Head of caudate nucleus (tissue), 42 donors: ENCODE measurements at regions of chr1 and their contacts with region 1.

Region 1: DNA sequence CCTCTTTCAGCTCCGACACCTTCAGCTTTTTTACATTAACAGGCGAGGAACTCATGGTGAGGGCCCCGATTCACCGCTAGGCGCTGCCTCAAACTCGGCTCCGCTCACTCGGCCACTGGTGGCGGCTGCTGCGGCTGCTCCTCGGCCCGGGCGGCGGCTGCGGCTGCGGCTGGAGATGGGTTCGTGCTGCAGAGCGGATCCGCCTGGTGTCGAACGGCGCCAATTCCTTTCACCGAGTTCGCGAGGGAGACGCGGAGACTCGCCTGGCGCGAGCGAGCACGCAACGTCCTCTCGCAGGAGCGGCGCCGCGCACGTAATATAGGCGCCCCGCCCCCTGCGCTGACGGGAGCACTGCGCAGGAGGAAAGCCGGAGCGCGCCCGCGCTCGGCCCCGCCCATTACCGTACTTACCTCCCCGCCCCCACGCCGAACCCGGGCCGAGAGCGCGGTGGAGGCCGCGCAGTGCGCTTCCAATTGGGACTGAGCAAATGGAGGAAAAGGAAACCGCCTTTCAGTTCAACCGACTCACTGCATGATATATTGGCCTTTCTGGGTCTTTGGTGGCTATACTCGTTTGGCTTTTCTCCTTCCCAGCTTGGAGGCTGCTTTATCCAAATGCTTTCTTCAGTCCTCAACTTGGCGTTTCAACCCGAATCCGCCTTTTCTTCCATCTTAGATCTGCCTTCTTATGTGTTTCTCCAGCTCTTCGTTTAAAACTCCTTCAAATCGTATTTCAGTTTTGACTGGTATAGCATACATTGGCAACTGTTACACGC is at the start of gene HNRNPU:
- DNase-seq: peak; percentile 89 to 99 (median 97)

Region 2: DNA sequence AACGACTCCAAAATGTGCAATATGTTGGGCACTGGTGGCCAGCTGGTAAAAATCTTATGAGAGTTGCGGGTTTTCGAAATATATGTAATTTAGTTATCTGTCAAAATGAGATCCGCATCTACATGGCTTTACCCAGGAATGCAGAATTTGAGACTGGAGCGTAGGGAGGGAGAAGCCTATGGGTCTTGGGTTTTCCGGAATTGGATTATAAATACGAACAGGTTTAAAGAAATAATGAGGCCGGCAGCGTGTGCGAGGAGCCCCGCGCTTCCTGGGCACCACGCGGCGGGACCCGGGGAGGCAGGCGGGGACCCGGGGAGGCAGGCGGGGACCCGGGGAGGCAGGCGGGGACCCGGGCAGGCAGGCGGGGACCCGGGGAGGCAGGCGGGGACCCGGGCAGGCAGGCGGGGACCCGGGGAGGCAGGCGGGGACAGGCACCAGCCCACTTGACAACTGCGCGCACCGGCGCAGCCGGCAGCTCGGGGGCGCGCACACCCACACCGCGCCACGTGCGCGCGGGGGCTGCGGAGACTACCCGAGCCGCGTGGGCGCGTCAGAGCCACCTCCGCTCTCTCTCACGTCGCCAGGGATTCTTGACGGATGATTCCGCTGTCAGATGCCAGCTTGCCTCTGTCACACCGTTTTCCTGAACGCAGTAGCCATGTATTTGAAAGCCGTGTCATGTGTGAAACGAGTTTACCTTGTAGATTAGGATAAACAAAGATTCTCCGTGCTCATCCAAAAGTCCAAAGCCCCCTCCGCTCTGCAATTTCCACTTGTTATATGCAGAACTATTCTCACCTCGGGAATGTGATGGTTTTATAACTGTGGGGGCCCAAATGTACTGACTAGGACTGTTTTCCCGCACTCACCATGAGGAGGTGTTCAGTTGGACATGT is 54.2 kb after region 1 on chr1:
- intact Hi-C with region 1: loop called (anchors 2 kb)
- DNase-seq: peak; percentile 21 to 85 (median 71)

Region 3: GRCh38 chr1:244970661-244971551 is 106.5 kb after region 1 on chr1:
- intact Hi-C with region 1: loop called (anchors 1 kb)
- DNase-seq: peak; percentile 86 to 98 (median 96)